MCF 10A (cell line): ENCODE measurements at regions of chr1 and their contacts with region 1.

Region 1: GRCh38 chr1:19485362-19486187 is at the start of gene CAPZB:
- DNase-seq: peak; percentile 88
- H3K4me3 Mint-ChIP-seq: peak within 1 kb of the TSS; percentile 86
- H3K27ac Mint-ChIP-seq: peak within 1 kb of the TSS; percentile 94
- H3K4me1 Mint-ChIP-seq: peaks cover 26% of the 10 kb centered on the region
- H3K27me3 Mint-ChIP-seq: no peaks in the 10 kb centered on the region
- CTCF ChIP-seq: no peak
- total RNA-seq, gene CAPZB: 252 and 259 TPM in 2 replicates

Region 2: GRCh38 chr1:19398309-19398760 is 87.2 kb before region 1 on chr1:
- CTCF ChIA-PET with region 1: interaction called, 5 read pairs
- POLR2A ChIA-PET with region 1: no interaction called
- intact Hi-C with region 1: loop called (anchors 5 kb)
- DNase-seq: peak; percentile 29
- H3K4me3 Mint-ChIP-seq: no peak overlapping the region
- H3K27ac Mint-ChIP-seq: no peak overlapping the region
- H3K4me1 Mint-ChIP-seq: peaks cover 21% of the 10 kb centered on the region
- H3K27me3 Mint-ChIP-seq: no peaks in the 10 kb centered on the region
- CTCF ChIP-seq: no peak

Region 3: DNA sequence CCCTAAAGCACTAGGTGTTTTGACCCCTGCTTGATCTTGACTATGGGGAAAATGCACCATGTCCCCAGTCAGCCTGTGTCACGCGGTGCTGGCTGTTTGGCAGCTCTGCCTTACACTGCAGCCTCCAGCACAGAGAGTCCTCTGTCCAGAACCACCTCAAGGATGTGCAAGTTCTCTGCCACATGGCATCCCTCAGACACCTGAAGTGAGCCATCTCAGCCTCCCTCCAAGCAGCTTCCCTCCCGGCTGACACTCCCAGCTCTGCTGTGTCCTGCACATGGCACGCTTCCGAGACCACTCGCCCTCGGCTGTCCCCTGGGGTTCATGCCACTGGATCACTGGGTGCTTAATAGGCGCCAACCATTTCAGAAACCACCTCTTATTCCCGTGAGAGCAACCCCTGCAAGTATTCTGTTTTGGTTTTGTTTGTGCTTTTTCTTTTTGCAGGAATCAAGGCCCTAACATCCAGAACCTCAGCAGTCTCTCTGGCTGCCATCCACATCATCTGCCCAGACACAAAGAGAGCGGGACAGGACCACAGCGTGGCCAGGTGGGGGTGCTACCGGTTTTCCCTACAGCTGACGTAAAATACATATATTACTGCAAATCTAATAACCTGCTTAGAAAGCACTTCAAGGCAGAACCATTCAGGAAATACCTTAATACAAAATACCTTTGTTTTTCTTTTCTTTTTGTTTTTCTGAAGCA is 46.0 kb before region 1 on chr1:
- CTCF ChIA-PET with region 1: interaction called, 5 read pairs
- POLR2A ChIA-PET with region 1: interaction called, 6 read pairs
- intact Hi-C with region 1: loop called (anchors 5 kb)
- DNase-seq: peak; percentile 41
- H3K4me3 Mint-ChIP-seq: no peak overlapping the region
- H3K27ac Mint-ChIP-seq: peak overlapping the region; percentile 83
- H3K4me1 Mint-ChIP-seq: peaks cover 72% of the 10 kb centered on the region
- H3K27me3 Mint-ChIP-seq: no peaks in the 10 kb centered on the region
- CTCF ChIP-seq: no peak

Region 4: DNA sequence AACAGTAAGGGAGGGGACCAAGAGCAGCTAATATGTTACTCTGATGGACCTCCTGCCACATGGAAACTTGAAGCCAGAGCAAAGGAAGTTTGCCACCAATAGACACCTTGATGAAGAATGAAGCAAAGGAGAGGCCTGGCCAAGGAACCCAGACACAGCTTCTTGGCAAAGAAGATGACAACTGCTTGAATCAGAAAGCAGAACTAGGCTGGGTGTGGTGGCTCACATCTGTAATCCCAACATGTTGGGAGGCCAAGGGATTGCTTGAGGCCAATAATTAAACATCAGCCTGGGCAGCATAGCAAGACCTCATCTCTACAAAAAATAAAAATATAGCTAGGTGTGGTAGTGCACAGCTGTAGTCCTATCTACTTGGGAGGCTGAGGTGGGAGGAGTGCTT is 31.4 kb after region 1 on chr1:
- CTCF ChIA-PET with region 1: no interaction called
- POLR2A ChIA-PET with region 1: no interaction called
- intact Hi-C with region 1: no loop called
- DNase-seq: no peak
- H3K4me3 Mint-ChIP-seq: no peak overlapping the region
- H3K27ac Mint-ChIP-seq: no peak overlapping the region
- H3K4me1 Mint-ChIP-seq: no peaks in the 10 kb centered on the region
- H3K27me3 Mint-ChIP-seq: no peaks in the 10 kb centered on the region
- CTCF ChIP-seq: no peak

Region 5: DNA sequence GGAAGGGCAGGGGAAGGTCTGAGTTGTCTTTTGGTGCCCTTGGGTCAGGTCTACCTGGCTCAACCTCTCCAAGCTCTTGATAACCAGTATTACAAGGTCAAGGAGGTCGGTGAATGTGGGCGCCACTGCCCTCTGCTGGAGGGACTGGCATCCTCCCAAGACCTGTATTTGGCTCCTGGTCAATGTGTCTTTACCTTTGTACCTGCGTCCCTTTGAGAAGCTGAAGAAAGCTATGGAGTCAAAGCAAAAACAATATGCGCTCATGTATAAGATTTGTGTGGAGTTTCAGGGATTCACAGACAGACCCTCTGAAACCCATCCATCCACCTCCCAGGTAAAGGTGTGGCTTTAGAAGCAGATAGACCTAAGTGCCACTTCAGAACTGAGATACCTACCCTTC is 96.7 kb after region 1 on chr1:
- CTCF ChIA-PET with region 1: interaction called, 5 read pairs
- POLR2A ChIA-PET with region 1: no interaction called
- intact Hi-C with region 1: loop called (anchors 1 kb)
- DNase-seq: peak; percentile 71
- H3K4me3 Mint-ChIP-seq: no peak overlapping the region
- H3K27ac Mint-ChIP-seq: no peak overlapping the region
- H3K4me1 Mint-ChIP-seq: no peaks in the 10 kb centered on the region
- H3K27me3 Mint-ChIP-seq: peaks cover 16% of the 10 kb centered on the region
- CTCF ChIP-seq: peak; percentile 57

Region 6: DNA sequence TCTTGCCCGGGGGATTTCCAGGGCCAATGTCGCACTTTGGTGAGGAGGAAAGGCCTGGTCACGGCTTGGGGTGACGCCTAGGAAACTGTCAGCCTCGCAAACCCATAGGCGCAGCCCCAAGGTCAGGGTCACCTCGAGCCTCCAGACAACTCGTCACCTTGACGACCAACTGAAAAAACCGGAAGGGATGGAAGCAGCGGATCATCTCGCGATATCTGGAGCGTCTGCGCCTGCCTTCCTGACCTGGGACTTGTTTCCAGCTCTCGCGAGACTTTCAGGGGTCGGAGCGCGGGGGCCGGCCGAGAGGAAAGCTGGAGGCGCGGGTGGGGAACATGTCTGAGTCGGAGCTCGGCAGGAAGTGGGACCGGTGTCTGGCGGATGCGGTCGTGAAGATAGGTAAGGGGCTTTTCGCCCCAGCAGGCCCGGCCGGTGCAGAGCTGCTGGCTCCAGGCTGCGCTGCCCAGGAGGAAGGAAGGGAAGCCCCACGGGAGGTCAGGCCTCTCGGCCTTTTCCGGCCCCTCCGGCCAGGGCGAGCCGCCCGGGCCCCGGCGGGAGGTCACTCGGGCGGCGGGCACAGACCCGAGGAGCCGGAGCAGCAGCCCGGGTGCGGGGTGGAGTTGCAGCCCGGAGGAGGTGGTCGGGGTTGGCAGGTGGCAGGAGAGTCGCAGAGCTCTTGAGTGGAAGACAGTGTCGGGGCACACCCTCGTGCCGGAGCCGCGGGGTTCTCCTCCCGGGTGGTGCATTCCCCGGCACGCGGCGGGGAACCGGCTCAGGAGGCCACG is 111.3 kb after region 1 on chr1:
- CTCF ChIA-PET with region 1: interaction called, 4 read pairs
- POLR2A ChIA-PET with region 1: interaction called, 24 read pairs
- intact Hi-C with region 1: no loop called
- DNase-seq: peak; percentile 98
- H3K4me3 Mint-ChIP-seq: peak overlapping the region; percentile 95
- H3K27ac Mint-ChIP-seq: peak overlapping the region; percentile 98
- H3K4me1 Mint-ChIP-seq: peaks cover 28% of the 10 kb centered on the region
- H3K27me3 Mint-ChIP-seq: no peaks in the 10 kb centered on the region
- CTCF ChIP-seq: no peak

Region 7: DNA sequence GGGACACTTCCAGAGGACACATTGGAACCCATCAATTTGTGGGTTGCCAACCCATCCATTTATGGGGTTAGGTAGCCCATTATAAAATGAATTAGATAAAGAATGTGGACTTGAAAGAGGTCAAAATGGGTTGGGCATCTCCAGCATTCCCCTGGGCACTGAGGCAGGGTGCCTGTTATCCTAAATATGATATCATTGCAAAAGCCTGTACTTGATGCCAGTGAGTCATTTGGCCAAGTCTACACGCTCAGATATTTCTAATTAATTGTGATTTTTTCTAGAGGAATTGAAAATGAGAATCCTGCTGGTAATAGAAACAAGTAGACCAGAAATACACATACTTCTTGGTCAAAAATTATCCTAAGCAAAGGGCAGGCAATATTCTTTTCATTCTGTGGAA is 136.6 kb after region 1 on chr1:
- CTCF ChIA-PET with region 1: no interaction called
- POLR2A ChIA-PET with region 1: no interaction called
- intact Hi-C with region 1: no loop called
- DNase-seq: peak; percentile 20
- H3K4me3 Mint-ChIP-seq: no peak overlapping the region
- H3K27ac Mint-ChIP-seq: peak overlapping the region; percentile 49
- H3K4me1 Mint-ChIP-seq: peaks cover 38% of the 10 kb centered on the region
- H3K27me3 Mint-ChIP-seq: no peaks in the 10 kb centered on the region
- CTCF ChIP-seq: no peak

Region 8: DNA sequence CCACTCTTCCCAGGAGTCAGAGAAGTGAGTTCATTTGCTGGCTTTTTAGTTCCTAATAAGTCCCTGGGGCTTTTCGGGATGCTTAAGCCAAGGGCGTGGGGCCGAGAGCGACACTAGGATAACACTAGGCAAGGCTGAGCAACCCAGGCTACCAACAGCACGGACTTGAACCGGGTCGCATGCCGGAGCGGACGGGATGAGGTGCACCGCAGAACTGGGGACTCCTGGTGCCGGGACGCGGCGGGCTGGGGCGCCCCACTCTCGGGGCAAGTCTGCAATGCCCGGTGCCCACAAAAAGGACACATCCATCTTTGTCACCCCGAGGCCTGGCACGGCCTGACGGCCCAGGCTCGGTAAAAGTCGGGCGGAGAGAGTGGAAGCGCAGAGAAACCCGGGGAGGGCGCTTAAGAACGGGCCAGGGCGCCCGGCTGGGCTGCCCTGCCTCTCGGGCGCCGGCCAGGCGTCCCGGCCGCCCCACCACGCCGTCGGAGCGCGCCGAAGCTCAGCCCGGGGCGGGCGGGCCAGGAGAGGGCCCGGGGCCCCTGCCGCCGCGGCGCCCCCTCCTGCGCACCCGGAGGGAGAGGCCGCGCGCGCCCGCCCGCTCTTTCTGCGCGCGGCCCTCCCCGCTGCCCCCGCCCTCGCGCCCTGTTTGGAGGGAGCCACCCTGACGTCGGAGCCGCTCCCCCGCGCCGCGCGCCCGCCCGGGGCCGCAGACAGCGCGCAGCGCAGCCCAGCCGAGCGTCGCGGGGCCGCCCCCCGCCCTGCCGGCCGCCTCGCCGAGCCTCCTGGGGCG is 158.2 kb after region 1 on chr1 and contains the start of gene NBL1:
- CTCF ChIA-PET with region 1: interaction called, 14 read pairs
- POLR2A ChIA-PET with region 1: interaction called, 20 read pairs
- intact Hi-C with region 1: loop called (anchors 2 kb)
- DNase-seq: peak; percentile 55
- H3K4me3 Mint-ChIP-seq: peak within 1 kb of the TSS; percentile 92
- H3K27ac Mint-ChIP-seq: peak within 1 kb of the TSS; percentile 91
- H3K4me1 Mint-ChIP-seq: peaks cover 54% of the 10 kb centered on the region
- H3K27me3 Mint-ChIP-seq: no peaks in the 10 kb centered on the region
- CTCF ChIP-seq: no peak
- total RNA-seq, gene NBL1: 70.4 and 73.3 TPM in 2 replicates

Region 9: DNA sequence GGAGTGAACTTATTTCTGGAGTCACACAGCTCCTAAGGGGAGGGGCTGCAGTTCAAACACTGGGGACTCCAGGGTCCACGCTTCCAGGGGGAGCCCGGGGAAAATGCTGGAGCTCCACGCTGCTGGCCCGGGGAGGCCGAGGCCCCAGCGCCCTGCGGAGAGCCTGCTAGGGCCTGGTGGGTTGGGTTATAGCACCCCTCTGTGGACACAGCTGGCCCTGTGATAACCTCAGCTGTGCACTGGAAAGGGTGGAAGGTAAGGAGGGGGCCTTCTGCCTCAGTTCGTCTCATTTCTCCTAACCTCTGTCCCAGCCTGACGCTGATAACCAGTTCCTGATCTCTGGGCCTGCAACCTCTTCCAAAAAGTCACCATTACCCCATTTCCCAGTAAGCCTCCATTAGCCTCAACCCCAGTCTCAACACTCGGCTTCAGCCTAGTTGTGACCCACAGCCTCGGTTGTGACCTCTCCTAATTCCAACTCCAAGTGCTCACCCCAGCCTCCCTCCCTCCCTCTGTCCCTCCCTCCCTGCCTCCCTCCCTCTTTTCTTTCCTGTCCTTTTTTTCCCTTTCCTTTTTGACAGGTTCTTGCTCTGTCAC is 165.7 kb after region 1 on chr1:
- CTCF ChIA-PET with region 1: interaction called, 14 read pairs
- POLR2A ChIA-PET with region 1: interaction called, 8 read pairs
- intact Hi-C with region 1: loop called (anchors 1 kb)
- DNase-seq: no peak
- H3K4me3 Mint-ChIP-seq: no peak overlapping the region
- H3K27ac Mint-ChIP-seq: peak overlapping the region; percentile 75
- H3K4me1 Mint-ChIP-seq: peaks cover 50% of the 10 kb centered on the region
- H3K27me3 Mint-ChIP-seq: no peaks in the 10 kb centered on the region
- CTCF ChIP-seq: peak; percentile 50